ENCODE measurements at regions of chrX and their contacts with region 1.

Region 1: GRCh38 chrX:105190252-105190853 is 30.1 kb downstream of the TEX13A start:
- DNase-seq: no peak
- ATAC-seq: no peak
- H3K4me3 ChIP-seq: no peak overlapping the region
- H3K27ac ChIP-seq: no peak overlapping the region
- H3K4me1 ChIP-seq: no peaks in the 10 kb centered on the region
- H3K27me3 ChIP-seq: no peaks in the 10 kb centered on the region; a peak in 1 of 4 replicates
- CTCF ChIP-seq: peak; percentile 62 to 91 (median 69)
- EP300 ChIP-seq: no peak
- POLR2A ChIP-seq: no peak
- RAD21 ChIP-seq: peak; percentile 35; the same call in 1 of the 2 replicates

Region 2: DNA sequence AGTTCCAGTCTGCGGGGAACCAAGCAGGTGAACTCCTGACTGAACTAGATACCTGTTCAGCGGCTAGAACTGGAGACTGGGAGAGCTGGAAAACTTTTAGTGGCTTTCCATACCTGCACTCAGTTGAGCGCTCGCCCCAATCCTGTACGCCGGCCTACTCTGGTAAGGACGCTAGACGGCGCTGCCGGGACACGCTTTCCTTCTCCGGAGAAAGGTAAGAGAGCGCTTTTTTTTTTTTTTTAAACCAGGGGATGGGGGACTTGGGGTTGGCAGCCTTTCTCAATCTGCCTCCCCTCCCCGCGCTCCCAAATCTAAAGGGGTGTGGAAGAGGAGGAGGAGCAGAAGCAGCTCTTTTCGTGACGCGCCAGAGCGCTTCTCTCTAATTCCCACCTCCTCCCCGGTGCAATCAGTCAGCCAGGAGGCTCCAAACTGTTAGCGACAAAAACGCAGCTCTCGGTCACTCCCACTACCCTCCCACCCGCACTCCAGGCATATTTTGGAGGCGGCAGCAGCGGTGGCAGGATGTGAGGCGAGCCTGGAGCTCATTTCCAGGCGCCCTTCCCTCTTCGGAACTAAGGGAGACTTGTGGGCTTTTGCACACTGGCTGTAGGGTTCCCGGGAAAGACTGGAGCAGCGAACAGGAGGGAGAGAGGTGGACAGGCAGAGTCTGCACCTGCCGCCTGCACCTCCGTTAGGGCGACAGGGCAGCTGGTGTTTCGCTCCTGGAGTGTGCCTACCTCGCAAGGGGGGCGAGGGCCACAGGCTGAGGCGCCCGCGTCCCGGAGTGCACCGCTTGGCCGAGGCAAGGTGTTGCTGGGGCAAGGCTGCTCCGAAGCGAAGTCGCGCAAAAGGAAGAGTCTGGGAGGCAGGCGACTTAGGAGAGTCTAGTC is 624.3 kb before region 1 on chrX and contains the start of gene IL1RAPL2:
- CTCF ChIA-PET with region 1: interaction called, 5 read pairs
- POLR2A ChIA-PET with region 1: no interaction called
- RAD21 ChIA-PET with region 1: no interaction called
- SMC1A ChIA-PET with region 1: no interaction called
- in situ Hi-C with region 1: no loop called
- intact Hi-C with region 1: loop called (anchors 10 kb)
- DNase-seq: no peak
- ATAC-seq: peak; percentile 62; the same call in 2 of the 3 replicates
- H3K4me3 ChIP-seq: no peak within 1 kb of the TSS
- H3K27ac ChIP-seq: no peak within 1 kb of the TSS
- H3K4me1 ChIP-seq: no peaks in the 10 kb centered on the region
- H3K27me3 ChIP-seq: peaks cover 0 to 2% of the 10 kb centered on the region in 2 experiments; a peak in 2 of 4 replicates
- CTCF ChIP-seq: peak; percentile 28 to 43 (median 36); a peak in 5 of 6 replicates
- EP300 ChIP-seq: no peak
- POLR2A ChIP-seq: no peak
- RAD21 ChIP-seq: 0 out of 2 replicates have a peak, but pooled peaks have one; percentile 34
- polyA plus RNA-seq, gene IL1RAPL2: not detected

Region 3: GRCh38 chrX:105173071-105173470 is 17.3 kb before region 1 on chrX:
- CTCF ChIA-PET with region 1: interaction called, 10 read pairs
- POLR2A ChIA-PET with region 1: interaction called, 4 read pairs
- RAD21 ChIA-PET with region 1: no interaction called
- SMC1A ChIA-PET with region 1: interaction called, 3 read pairs
- in situ Hi-C with region 1: no loop called
- intact Hi-C with region 1: no loop called
- DNase-seq: no peak
- ATAC-seq: no peak
- H3K4me3 ChIP-seq: no peak overlapping the region
- H3K27ac ChIP-seq: no peak overlapping the region
- H3K4me1 ChIP-seq: no peaks in the 10 kb centered on the region
- H3K27me3 ChIP-seq: no peaks in the 10 kb centered on the region
- CTCF ChIP-seq: no peak
- EP300 ChIP-seq: no peak
- POLR2A ChIP-seq: no peak
- RAD21 ChIP-seq: no peak

Region 4: DNA sequence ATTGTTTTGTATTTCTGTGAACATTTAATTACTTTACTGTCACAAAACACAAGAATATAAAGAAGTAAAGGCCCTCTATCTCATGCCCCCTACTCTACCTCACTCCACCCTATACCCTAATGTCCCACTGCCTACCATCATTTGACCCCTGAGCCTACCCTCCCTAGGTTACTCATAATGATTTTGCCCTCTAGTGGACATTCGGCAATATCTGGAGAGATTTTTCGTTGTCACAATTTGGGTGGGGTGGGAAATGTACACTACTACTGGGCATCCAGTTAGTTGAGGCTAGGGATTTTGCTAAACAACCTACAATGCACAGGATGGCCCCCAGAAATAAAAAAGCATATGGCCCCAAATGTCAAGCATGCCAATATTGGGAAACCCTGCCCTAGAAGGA is 19.9 kb after region 1 on chrX:
- CTCF ChIA-PET with region 1: interaction called, 10 read pairs
- POLR2A ChIA-PET with region 1: no interaction called
- RAD21 ChIA-PET with region 1: no interaction called
- SMC1A ChIA-PET with region 1: interaction called, 3 read pairs
- in situ Hi-C with region 1: no loop called
- intact Hi-C with region 1: no loop called
- DNase-seq: no peak
- ATAC-seq: peak; percentile 36; the same call in 1 of the 3 replicates
- H3K4me3 ChIP-seq: no peak overlapping the region
- H3K27ac ChIP-seq: no peak overlapping the region
- H3K4me1 ChIP-seq: no peaks in the 10 kb centered on the region
- H3K27me3 ChIP-seq: no peaks in the 10 kb centered on the region
- CTCF ChIP-seq: peak in 2 of 3 experiments; percentile 12 to 16; a peak in 2 of 6 replicates
- EP300 ChIP-seq: no peak
- POLR2A ChIP-seq: no peak
- RAD21 ChIP-seq: no peak